Prostate gland (tissue), 2 donors: ENCODE measurements at regions of chr3 and their contacts with region 1.

Region 1: GRCh38 chr3:24299806-24300626 is 194.6 kb downstream of the THRB start:
- DNase-seq: no peak
- H3K4me3 ChIP-seq: no peak overlapping the region
- H3K27ac ChIP-seq: no peak overlapping the region
- H3K4me1 ChIP-seq: no peaks in the 10 kb centered on the region
- H3K27me3 ChIP-seq: no peaks in the 10 kb centered on the region
- CTCF ChIP-seq: no peak
- POLR2A ChIP-seq: no peak

Region 2: GRCh38 chr3:24242012-24242698 is 57.9 kb before region 1 on chr3:
- intact Hi-C with region 1: no loop called
- DNase-seq: peak; percentile 29
- H3K4me3 ChIP-seq: no peak overlapping the region
- H3K27ac ChIP-seq: no peak overlapping the region
- H3K4me1 ChIP-seq: no peaks in the 10 kb centered on the region
- H3K27me3 ChIP-seq: no peaks in the 10 kb centered on the region
- CTCF ChIP-seq: no peak
- POLR2A ChIP-seq: no peak

Region 3: DNA sequence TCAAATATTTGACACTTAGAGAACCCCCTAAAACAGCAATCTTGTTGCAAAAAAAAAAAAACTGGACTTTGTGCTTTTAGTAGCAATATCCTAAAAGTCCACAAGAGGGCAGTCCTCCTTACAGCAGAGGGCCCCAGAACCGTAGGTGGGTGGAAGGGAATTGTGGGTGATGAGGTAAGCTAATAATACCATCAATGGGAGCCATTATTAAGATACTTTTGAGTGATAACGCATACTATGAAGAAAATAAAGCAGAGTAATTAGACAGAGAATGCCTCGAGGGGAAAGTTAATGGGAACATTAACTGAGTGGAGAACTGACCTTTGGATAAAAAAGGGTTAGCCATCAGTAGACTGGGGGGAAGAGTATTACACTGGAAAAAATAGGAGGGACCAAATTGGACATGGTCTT is 35.3 kb before region 1 on chr3:
- intact Hi-C with region 1: no loop called
- DNase-seq: no peak
- H3K4me3 ChIP-seq: no peak overlapping the region
- H3K27ac ChIP-seq: no peak overlapping the region
- H3K4me1 ChIP-seq: no peaks in the 10 kb centered on the region
- H3K27me3 ChIP-seq: no peaks in the 10 kb centered on the region
- CTCF ChIP-seq: peak; percentile 53 to 66 (median 60)
- POLR2A ChIP-seq: no peak

Region 4: GRCh38 chr3:24365194-24365612 is 65.2 kb after region 1 on chr3:
- intact Hi-C with region 1: loop called (anchors 10 kb)
- DNase-seq: peak; percentile 89
- H3K4me3 ChIP-seq: no peak overlapping the region
- H3K27ac ChIP-seq: no peak overlapping the region
- H3K4me1 ChIP-seq: no peaks in the 10 kb centered on the region
- H3K27me3 ChIP-seq: no peaks in the 10 kb centered on the region
- CTCF ChIP-seq: peak in 3 of 4 experiments; percentile 33 to 37 (median 36)
- POLR2A ChIP-seq: no peak